ENCODE measurements at regions of chr7 and their contacts with region 1.

Region 1: GRCh38 chr7:7968543-7969305 is at the start of gene GLCCI1:
- DNase-seq: peak; percentile 96
- H3K4me3 Mint-ChIP-seq: peak within 1 kb of the TSS; percentile 84
- H3K27ac Mint-ChIP-seq: peak within 1 kb of the TSS; percentile 86
- H3K4me1 Mint-ChIP-seq: peaks cover 13% of the 10 kb centered on the region
- H3K27me3 Mint-ChIP-seq: no peaks in the 10 kb centered on the region
- total RNA-seq, gene GLCCI1: 25.4 to 29.0 TPM

Region 2: DNA sequence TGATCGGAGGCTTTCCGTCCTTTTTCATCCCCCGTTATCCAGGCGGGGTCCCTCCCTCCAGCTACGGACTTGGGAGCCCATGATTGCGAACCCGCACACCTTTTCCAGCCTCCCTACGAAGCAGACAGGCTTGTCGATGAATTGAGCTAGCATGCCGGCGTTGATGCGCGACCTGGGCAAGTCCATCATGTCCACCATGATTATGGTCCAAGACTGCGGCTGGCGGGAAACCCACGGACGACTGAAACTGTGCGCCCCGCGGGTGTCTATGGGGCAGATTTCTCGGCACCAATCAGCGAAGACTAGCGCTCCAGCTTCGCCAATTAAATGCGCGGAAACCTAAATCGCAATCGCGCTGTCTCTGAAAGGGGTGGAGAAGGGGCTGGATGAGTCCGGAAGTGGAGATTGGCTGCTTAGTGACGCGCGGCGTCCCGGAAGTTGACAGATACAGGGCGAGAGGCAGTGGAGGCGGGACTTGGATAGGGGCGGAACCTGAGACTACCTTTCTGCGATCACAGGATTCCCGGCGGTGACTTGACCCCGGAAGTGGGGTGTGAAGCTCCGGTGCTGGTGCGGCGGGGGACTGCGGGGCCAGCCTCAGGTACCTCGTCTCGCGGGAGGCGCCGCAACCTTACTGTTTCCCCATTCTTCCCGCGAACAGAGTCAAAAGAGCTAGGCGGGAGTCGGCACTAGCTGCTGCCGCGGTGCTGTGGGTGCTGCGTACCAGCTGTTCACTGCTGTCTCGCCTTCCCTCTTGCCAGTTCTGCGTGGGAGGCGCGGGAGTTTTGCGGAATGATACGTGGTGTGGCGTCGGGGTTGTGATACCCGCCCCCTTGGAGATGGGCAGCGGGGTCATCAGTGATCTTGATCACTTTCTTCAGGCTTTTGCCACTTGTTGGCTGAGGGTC is 328.2 kb before region 1 on chr7 and contains the start of gene UMAD1:
- CTCF ChIA-PET with region 1: no interaction called
- POLR2A ChIA-PET with region 1: interaction called, 61 read pairs
- DNase-seq: peak; percentile 99
- H3K4me3 Mint-ChIP-seq: peak within 1 kb of the TSS; percentile 90
- H3K27ac Mint-ChIP-seq: peak within 1 kb of the TSS; percentile 90
- H3K4me1 Mint-ChIP-seq: peaks cover 36% of the 10 kb centered on the region
- H3K27me3 Mint-ChIP-seq: no peaks in the 10 kb centered on the region
- total RNA-seq, gene UMAD1: 16.1 to 16.7 TPM

Region 3: GRCh38 chr7:7761340-7761980 is 207.3 kb before region 1 on chr7:
- CTCF ChIA-PET with region 1: interaction called, 3 read pairs
- POLR2A ChIA-PET with region 1: interaction called, 11 read pairs
- DNase-seq: no peak
- H3K4me3 Mint-ChIP-seq: peak overlapping the region; percentile 90
- H3K27ac Mint-ChIP-seq: peak overlapping the region; percentile 91
- H3K4me1 Mint-ChIP-seq: peaks cover 38% of the 10 kb centered on the region
- H3K27me3 Mint-ChIP-seq: no peaks in the 10 kb centered on the region

Region 4: DNA sequence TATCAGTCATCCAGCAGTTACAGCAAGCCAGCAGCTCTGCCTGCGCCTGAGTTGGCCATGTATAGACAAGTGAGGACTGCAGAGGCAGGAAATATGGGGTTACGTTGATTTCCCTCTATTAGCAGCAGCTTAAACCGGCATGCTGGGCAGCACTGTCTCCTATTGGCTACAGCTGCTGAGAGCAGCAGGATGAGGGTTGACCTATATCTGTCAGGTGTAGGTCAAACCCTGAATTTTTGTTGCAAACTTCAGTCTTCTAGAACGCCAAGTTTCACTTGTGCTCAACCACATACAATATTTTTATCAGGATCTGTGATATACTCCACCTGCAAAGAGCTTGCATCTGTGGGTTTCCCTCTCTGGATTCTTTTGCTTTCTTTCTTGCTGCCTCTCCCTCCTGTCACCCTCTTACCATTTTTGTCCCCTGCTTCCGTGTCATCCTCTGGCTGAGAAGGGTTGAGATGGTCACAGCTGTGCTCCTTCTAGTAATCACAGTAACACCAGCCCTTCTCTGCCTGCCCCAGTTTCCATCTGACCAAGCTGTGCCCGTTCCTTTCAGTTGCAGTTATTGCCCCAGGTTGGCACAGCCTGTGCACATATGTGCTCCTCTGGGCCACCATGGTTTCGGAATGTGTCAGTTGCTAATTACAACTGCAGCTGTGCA is 24.0 kb before region 1 on chr7:
- CTCF ChIA-PET with region 1: interaction called, 14 read pairs
- POLR2A ChIA-PET with region 1: interaction called, 124 read pairs
- DNase-seq: peak; percentile 76
- H3K4me3 Mint-ChIP-seq: peak overlapping the region; percentile 71
- H3K27ac Mint-ChIP-seq: peak overlapping the region; percentile 96
- H3K4me1 Mint-ChIP-seq: peaks cover 34% of the 10 kb centered on the region
- H3K27me3 Mint-ChIP-seq: no peaks in the 10 kb centered on the region

Region 5: DNA sequence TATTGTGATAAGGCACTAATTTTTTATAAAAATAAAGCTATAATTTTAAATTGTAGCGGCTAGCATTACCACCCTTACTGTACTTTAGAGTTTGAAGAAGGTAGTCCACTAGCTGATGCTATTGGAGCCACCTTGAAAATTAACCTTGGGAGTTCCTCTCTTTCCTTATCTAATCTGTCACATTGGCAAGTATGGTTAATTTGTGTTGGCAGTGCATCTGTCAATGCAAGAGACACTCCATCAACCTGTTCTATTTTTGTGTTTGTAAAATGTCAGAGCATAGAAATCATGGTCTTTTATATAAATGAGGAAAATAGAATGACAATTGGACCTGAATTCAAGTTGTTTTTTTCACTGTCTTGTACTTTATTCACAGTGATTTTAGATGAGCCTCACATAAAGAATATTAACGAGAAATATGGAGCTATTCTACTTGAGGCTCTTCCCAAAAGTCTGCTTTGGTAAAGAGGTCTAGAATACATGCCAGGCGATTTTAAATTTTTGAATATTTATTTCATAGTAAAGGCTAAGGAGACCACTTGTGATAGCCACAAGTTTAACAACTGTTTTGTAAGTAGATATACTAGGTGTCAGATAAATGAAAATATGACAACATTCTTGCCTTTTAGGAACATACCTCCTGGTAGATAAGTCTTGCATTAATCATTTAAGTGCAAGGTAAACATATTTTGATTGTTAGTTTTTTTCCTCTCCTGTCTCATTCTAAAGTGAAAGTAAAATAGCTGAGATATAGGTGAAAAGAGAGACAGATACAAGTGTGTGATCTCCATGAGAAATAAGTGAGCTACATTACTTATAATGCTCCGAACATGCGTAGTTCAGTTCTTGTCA is 20.6 kb after region 1 on chr7:
- CTCF ChIA-PET with region 1: interaction called, 3 read pairs
- POLR2A ChIA-PET with region 1: interaction called, 22 read pairs
- DNase-seq: no peak
- H3K4me3 Mint-ChIP-seq: peak overlapping the region; percentile 50
- H3K27ac Mint-ChIP-seq: no peak overlapping the region
- H3K4me1 Mint-ChIP-seq: peaks cover 29% of the 10 kb centered on the region
- H3K27me3 Mint-ChIP-seq: no peaks in the 10 kb centered on the region

Region 6: DNA sequence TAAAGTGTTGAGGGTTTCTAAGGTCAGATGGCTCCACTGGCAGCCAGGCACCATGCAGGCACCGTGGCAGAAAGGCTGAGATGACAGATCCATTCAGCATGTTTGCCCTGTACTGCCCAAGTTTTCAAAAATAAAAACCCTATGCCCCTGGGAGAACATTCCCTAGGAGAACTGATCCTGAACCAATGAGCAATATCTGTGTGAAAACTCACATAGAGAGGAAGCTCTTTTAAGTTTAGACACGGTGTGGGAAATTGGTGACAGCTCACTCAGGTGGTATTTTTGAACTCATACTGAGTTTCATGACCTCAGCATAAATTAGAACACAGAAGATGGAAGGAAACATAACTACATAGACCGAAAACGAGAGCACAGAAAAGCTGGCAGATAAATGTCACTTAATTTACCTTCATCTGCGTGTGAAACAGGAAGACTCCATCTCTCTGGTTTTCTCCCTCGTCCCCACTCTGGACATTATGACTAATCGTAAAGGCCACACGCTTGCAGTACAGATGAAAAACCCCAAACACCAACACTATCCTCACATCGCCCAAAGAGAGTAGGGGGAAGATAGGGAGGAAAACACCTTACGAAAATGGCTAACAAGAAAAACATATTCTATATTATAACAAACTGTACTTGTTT is 165.5 kb after region 1 on chr7:
- CTCF ChIA-PET with region 1: no interaction called
- POLR2A ChIA-PET with region 1: interaction called, 51 read pairs
- DNase-seq: peak; percentile 46
- H3K4me3 Mint-ChIP-seq: peak overlapping the region; percentile 15
- H3K27ac Mint-ChIP-seq: peak overlapping the region; percentile 82
- H3K4me1 Mint-ChIP-seq: peaks cover 55% of the 10 kb centered on the region
- H3K27me3 Mint-ChIP-seq: no peaks in the 10 kb centered on the region